ENCODE measurements at regions of chr13 and their contacts with region 1.

Region 1: GRCh38 chr13:52159321-52160086 is at the start of gene NEK3:
- DNase-seq: peak; percentile 77 to 87 (median 84)
- ATAC-seq: peak; percentile 80 to 96 (median 93)
- H3K4me3 ChIP-seq: peak within 1 kb of the TSS; percentile 73 to 99 (median 88)
- H3K27ac ChIP-seq: peak within 1 kb of the TSS; percentile 81 to 98 (median 90)
- H3K4me1 ChIP-seq: peaks cover 0 to 46% (median 23%) of the 10 kb centered on the region in 12 donors
- H3K27me3 ChIP-seq: no peaks in the 10 kb centered on the region
- CTCF ChIP-seq: no peak
- POLR2A ChIP-seq: peak in 1 of 2 donors; percentile 30
- total RNA-seq, gene NEK3: 2.3 to 10.7 (median 5.2) TPM

Region 2: GRCh38 chr13:51601601-51602565 is 557.6 kb before region 1 on chr13:
- intact Hi-C with region 1: no loop called
- DNase-seq: no peak
- ATAC-seq: no peak
- H3K4me3 ChIP-seq: no peak overlapping the region
- H3K27ac ChIP-seq: no peak overlapping the region
- H3K4me1 ChIP-seq: peaks cover 0 to 51% (median 13%) of the 10 kb centered on the region in 12 donors
- H3K27me3 ChIP-seq: no peaks in the 10 kb centered on the region
- CTCF ChIP-seq: no peak
- POLR2A ChIP-seq: no peak

Region 3: DNA sequence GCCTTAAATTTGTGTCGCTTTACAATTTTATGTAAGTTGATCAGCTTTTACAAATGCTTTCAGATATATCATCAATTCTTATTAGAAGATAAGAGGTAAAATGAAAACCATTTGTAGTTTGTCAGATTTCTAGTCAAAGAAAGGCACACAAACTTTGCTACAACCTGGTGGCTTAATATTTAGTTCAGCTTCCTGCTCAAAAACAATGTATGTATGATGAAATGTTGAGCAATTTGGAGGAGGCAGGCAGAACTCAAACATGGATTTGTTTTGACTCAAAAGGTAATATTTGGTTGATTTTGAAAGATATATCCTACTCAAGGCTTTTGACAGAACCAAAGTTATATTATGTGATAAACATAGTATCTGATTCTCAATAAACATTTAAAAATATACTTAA is 54.9 kb before region 1 on chr13:
- intact Hi-C with region 1: no loop called
- DNase-seq: no peak
- ATAC-seq: no peak
- H3K4me3 ChIP-seq: no peak overlapping the region
- H3K27ac ChIP-seq: no peak overlapping the region
- H3K4me1 ChIP-seq: no peaks in the 10 kb centered on the region
- H3K27me3 ChIP-seq: no peaks in the 10 kb centered on the region
- CTCF ChIP-seq: no peak
- POLR2A ChIP-seq: no peak

Region 4: DNA sequence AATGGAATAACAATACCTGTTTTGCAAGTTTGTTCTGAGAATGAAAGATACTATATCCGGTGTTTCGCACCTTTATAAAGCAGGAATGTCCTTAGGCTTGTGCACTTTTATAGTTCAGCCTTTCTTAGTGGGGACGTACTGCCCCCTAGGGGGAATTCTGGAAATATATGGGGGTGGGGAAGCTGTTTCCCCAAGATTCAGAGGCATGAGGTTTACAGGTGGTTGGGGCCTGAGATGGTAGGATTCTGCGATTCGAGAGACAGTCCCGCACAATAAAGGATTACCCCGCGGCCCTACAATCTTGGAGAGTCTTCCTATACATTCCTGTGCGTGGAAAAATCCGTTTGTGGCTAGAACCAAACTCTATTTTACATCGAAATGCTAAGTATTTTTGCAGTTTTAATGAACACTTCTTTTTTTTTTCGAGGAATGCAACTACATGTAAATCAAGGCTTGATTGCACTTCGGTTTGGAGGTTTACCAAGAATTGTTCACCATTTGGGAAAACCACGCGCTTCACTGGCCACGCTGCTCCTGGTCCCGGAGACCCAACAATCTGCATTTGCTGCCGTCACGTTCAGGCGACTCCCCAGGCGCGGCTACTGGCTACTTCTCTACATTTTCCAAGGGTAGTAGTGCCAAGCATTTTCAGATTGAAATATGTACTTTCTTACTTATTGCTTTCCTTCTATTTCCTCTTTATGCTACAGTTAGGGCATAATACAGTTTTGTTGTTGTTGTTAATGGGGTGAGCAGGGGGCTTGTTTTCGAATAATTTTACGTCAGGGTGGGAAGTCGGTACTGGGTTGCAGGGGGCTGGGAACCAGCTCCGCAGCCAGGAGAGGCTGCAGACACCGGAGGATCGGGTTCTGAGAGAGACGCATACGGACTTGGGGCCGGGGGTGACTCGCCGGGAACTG is 31.5 kb before region 1 on chr13:
- intact Hi-C with region 1: no loop called
- DNase-seq: peak in 3 of 5 donors; percentile 43 to 50 (median 45)
- ATAC-seq: peak; percentile 60 to 90 (median 82)
- H3K4me3 ChIP-seq: peak overlapping the region; percentile 62 to 85 (median 75)
- H3K27ac ChIP-seq: peak overlapping the region in 5 of 12 donors; percentile 1 to 48 (median 34)
- H3K4me1 ChIP-seq: peaks cover 0 to 23% (median 12%) of the 10 kb centered on the region in 12 donors
- H3K27me3 ChIP-seq: no peaks in the 10 kb centered on the region
- CTCF ChIP-seq: peak; percentile 78 to 91 (median 82)
- POLR2A ChIP-seq: no peak

Region 5: DNA sequence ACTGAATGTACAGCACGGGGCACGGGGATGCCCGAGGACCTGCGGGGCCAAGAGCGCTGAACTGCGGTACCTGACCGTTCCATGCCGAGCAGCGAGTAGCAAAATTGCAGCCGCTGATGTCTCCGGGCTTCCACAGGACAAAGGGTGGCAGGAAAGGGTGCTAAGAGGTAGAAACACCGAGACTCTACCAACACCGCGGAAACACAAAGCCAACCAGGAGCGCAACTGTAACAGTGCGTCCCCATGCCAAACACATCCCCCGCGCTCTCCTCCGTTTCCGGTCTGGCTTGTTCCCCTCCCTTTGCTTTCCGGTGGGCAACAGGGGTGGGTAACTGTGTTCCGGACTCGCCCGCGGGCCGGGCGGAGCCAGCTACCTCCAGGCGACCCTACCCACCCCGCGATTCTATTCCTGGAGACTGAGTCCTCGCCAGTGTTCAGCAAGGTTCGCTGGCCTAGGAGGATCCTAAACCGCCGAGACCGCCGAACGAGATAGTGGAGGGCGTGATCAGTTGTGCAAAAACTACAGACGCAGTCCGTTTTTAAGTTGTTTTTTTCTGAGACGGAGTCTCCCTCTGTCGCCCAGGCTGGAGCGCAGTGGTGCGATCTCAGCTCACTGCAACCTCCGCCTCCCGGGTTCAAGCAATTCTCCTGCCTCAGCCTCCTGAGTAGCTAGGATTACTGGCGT is 34.8 kb after region 1 on chr13:
- intact Hi-C with region 1: loop called in 3 of 10 experiments (anchors 2 to 5 kb)
- DNase-seq: peak; percentile 85 to 92 (median 87)
- ATAC-seq: peak; percentile 91 to 95 (median 94)
- H3K4me3 ChIP-seq: peak overlapping the region; percentile 50 to 98 (median 82)
- H3K27ac ChIP-seq: peak overlapping the region; percentile 63 to 90 (median 84)
- H3K4me1 ChIP-seq: peaks cover 0 to 29% (median 18%) of the 10 kb centered on the region in 12 donors
- H3K27me3 ChIP-seq: no peaks in the 10 kb centered on the region
- CTCF ChIP-seq: peak in 2 of 12 donors; percentile 25 to 32
- POLR2A ChIP-seq: peak in 1 of 2 donors; percentile 46